Vagina (tissue), 2 donors: ENCODE measurements at regions of chr5 and their contacts with region 1.

Region 1: DNA sequence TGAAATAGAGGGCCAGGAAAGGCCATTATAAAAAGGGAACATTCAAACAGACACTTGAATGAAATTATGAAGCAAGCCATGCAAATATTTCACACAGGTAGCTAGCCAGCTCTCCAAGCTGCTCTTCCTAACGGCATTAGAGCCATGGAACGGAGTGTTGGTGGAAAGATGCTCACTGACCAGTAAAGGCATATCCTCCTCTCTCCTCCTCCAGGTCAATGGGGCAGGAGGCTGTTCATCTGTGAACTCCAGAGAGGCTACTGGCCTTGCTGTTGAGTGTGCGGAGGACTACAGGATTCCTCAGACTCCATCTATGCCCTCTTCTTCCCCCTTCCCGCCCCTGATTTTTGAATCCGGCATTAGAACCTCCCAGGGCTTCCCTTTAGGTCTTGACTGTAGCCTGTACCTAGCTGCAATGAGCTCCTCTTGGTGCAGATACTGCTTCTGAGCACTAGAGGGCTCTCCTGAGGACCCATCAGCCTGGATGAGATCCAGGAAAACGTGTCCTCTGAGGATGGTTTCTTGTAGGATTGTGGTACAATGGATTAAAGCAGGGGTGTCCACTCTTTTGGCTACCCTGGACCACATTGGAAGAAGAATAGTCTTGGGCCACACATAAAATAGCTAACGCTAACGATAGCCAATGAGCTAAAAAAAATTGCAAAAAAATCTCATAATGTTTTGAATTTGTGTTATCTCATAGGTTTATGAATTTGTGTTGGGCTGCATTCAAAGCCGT is 162.2 kb downstream of the SREK1 start:
- DNase-seq: no peak
- H3K4me3 ChIP-seq: no peak overlapping the region
- H3K27ac ChIP-seq: no peak overlapping the region
- H3K4me1 ChIP-seq: no peaks in the 10 kb centered on the region
- H3K27me3 ChIP-seq: no peaks in the 10 kb centered on the region
- CTCF ChIP-seq: peak; percentile 20 to 65 (median 42)
- POLR2A ChIP-seq: no peak

Region 2: DNA sequence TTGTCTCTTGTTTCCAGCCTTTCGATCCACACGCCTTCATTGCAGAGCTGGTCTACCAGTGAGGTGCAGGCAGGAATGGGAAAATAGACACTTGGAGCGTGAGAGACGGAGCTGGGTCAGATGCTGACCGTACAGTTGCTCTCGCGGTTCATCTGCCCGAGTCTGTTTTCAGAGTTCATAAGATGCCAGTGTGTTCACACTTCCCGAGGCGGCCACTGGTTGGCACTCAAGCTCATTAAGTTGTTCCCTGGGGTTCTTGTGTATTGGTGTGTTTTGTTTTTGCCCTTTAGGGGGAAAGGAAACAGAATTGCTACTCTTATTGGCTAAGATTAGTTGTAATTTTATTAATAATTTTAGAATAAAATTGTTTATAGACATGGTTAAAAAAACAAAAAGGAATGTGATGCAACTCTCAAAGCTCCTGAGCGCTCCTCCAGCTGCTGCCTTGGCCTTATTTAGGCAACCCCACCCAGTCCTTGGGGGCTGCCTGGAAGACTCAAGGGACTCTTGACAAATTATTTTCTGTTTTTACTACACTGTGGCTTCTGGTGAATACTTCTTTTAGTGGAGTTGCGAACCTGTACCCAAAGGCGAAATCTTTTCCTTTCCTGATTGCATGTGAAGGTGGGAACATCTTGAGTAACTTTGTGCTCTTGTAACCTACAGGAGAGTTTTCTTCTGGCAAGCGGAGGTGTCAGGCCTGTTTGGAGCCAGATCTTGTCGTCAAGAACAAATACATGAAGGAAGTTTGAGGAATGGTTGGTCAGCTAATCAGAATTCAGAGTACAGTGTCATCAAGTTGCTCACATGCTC is 436.0 kb after region 1 on chr5:
- intact Hi-C with region 1: loop called (anchors 5 kb)
- DNase-seq: no peak
- H3K4me3 ChIP-seq: no peak overlapping the region
- H3K27ac ChIP-seq: no peak overlapping the region
- H3K4me1 ChIP-seq: no peaks in the 10 kb centered on the region
- H3K27me3 ChIP-seq: no peaks in the 10 kb centered on the region
- CTCF ChIP-seq: no peak
- POLR2A ChIP-seq: no peak

Region 3: GRCh38 chr5:66757834-66758371 is 451.6 kb after region 1 on chr5:
- intact Hi-C with region 1: loop called (anchors 2 kb)
- DNase-seq: no peak
- H3K4me3 ChIP-seq: no peak overlapping the region
- H3K27ac ChIP-seq: no peak overlapping the region
- H3K4me1 ChIP-seq: no peaks in the 10 kb centered on the region
- H3K27me3 ChIP-seq: no peaks in the 10 kb centered on the region
- CTCF ChIP-seq: no peak
- POLR2A ChIP-seq: no peak